ENCODE measurements at regions of chr10 and their contacts with region 1.

Region 1: DNA sequence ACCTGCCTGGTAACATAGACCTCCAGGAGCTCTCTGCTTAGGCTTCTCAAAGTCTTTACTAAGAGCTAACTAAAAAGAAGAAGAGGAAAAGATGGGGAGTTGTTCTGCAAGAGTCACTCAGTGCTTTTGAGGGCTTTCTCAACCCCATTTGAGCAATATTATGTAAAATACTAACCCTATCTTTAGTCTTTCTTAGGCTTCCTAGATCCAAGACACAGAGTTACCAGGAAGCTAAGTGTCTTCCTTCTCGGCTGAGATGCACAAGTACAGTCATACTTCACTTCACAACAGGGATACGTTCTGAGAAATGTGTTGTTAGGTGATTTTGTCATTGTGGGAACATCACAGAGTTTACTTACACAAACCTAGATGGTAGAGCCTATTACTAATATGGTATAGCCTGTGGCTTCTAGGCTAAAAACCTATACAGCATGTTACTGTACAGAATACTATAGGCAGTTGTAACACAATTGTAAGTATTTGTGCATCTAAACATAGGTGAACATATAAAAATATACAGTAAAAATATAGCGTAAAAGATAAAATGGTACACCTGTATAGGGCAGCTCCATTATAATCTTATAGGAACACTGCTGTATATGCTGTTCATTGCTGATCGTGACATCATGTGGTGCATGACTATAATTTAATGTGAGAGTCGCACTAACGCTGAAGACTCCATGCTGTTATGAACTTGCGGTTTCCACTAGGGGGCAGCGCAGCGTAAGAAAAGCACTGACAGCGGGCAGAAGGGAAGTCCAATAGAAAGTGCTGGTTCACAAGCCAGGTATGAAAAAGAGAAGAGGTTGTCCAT is 16.3 kb downstream of the ANKRD22 start:
- DNase-seq: peak; percentile 78 to 91 (median 88)
- H3K4me3 ChIP-seq: no peak overlapping the region
- H3K27ac ChIP-seq: no peak overlapping the region
- H3K4me1 ChIP-seq: no peaks in the 10 kb centered on the region
- H3K27me3 ChIP-seq: no peaks in the 10 kb centered on the region
- CTCF ChIP-seq: peak; percentile 76 to 93 (median 91)
- EP300 ChIP-seq: no peak
- POLR2A ChIP-seq: peak; percentile 25

Region 2: GRCh38 chr10:88926566-88927415 is 91.5 kb after region 1 on chr10:
- intact Hi-C with region 1: loop called in 3 of 4 experiments (anchors 2 to 5 kb)
- DNase-seq: no peak
- H3K4me3 ChIP-seq: peak overlapping the region; percentile 9
- H3K27ac ChIP-seq: peak overlapping the region; percentile 9 to 70
- H3K4me1 ChIP-seq: peaks cover 6% of the 10 kb centered on the region
- H3K27me3 ChIP-seq: no peaks in the 10 kb centered on the region
- CTCF ChIP-seq: no peak
- EP300 ChIP-seq: no peak
- POLR2A ChIP-seq: no peak

Region 3: GRCh38 chr10:89029785-89030437 is 194.6 kb after region 1 on chr10:
- intact Hi-C with region 1: loop called in 1 of 4 experiments (anchors 10 kb)
- DNase-seq: peak; percentile 74 to 87 (median 77)
- H3K4me3 ChIP-seq: no peak overlapping the region
- H3K27ac ChIP-seq: peak overlapping the region in 1 of 2 donors; percentile 32
- H3K4me1 ChIP-seq: no peaks in the 10 kb centered on the region
- H3K27me3 ChIP-seq: no peaks in the 10 kb centered on the region
- CTCF ChIP-seq: peak; percentile 55 to 93 (median 93)
- EP300 ChIP-seq: no peak
- POLR2A ChIP-seq: no peak

Region 4: DNA sequence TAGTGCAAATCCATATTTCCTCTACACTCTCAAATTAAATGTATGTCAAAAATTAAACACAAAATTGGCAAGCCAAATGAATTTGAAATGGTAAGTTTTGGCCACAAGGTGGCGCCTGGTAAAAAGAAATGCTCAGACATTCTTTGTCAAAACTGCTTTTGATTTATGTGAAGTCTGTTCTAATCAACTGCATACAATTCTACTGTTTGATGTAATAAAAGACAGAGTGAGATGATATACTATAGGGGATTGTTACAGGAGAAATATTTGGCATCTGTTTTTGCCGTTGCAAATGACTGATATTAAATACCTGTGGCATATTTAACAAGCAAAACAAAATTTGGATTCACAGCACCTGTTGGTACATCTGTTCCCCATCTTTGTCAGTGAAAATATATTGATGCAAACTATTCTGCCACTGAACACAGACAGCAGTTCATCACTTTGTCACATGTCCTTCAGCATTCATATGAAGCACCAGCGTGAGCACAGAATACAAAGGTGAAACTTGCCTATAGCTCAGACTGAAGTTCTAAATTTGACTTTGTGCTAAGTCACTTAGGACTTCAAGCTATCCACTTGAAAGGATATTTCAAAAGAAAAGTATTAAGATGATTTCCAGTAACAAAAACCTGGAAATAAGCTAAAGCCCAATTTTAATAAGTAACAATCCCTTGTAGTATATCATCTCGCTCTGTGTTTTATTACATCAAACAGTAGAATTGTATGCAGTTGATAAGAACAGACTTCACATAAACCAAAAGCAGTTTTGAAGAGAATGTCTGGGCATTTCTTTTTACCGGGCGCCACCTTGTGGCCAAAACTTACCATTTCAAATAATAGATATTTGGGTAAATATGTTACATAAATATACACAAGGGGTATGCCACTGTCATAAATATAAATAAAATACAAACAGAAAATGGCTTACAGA is 382.0 kb after region 1 on chr10:
- intact Hi-C with region 1: loop called (anchors 5 to 10 kb)
- DNase-seq: peak; percentile 33 to 75 (median 62)
- H3K4me3 ChIP-seq: no peak overlapping the region
- H3K27ac ChIP-seq: peak overlapping the region in 1 of 2 donors; percentile 53
- H3K4me1 ChIP-seq: peaks cover 2% of the 10 kb centered on the region
- H3K27me3 ChIP-seq: no peaks in the 10 kb centered on the region
- CTCF ChIP-seq: peak; percentile 61 to 86 (median 78)
- EP300 ChIP-seq: no peak
- POLR2A ChIP-seq: no peak

Measured in ovary (tissue), 10 donors.